ENCODE measurements at regions of chr17 and their contacts with region 1.

Region 1: DNA sequence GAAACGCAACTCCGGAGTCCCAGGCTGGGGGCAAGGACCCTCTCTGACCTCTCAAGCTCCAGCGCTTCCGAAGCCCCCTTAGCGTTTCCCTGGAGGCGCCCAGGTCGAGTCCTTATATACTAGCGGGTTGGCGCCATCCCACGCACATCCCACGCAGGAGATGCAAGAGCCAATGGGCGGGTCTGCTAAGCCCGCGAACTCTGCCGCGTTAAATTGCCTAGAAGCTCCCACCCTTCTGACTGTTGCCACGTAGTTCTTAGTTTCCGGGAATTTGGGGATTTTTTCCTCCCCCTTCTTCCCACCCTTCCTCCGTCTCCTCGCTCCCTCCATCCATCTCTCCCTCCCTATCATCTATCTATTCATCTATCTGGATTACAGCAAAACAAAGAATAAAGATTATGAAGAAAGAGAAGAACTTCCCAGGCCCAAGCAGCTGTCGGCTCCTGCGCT is at the start of gene SLFN11:
- DNase-seq: peak; percentile 94
- ATAC-seq: peak; percentile 98
- H3K4me3 ChIP-seq: peak within 1 kb of the TSS; percentile 92 to 99
- H3K27ac ChIP-seq: peak within 1 kb of the TSS; percentile 98 to 99
- H3K4me1 ChIP-seq: no peaks in the 10 kb centered on the region
- H3K27me3 ChIP-seq: no peaks in the 10 kb centered on the region
- total RNA-seq, gene SLFN11: 49.0 to 93.3 TPM

Region 2: GRCh38 chr17:35242805-35243560 is 130.6 kb before region 1 on chr17 and contains the start of gene SLFN5:
- intact Hi-C with region 1: loop called in 1 of 2 experiments (anchors 2 kb)
- DNase-seq: peak; percentile 96 to 97
- ATAC-seq: peak; percentile 97
- H3K4me3 ChIP-seq: peak within 1 kb of the TSS; percentile 75 to 79
- H3K27ac ChIP-seq: peak within 1 kb of the TSS; percentile 20 to 76
- H3K4me1 ChIP-seq: no peaks in the 10 kb centered on the region
- H3K27me3 ChIP-seq: no peaks in the 10 kb centered on the region
- total RNA-seq, gene SLFN5: 40.4 to 66.3 TPM

Region 3: DNA sequence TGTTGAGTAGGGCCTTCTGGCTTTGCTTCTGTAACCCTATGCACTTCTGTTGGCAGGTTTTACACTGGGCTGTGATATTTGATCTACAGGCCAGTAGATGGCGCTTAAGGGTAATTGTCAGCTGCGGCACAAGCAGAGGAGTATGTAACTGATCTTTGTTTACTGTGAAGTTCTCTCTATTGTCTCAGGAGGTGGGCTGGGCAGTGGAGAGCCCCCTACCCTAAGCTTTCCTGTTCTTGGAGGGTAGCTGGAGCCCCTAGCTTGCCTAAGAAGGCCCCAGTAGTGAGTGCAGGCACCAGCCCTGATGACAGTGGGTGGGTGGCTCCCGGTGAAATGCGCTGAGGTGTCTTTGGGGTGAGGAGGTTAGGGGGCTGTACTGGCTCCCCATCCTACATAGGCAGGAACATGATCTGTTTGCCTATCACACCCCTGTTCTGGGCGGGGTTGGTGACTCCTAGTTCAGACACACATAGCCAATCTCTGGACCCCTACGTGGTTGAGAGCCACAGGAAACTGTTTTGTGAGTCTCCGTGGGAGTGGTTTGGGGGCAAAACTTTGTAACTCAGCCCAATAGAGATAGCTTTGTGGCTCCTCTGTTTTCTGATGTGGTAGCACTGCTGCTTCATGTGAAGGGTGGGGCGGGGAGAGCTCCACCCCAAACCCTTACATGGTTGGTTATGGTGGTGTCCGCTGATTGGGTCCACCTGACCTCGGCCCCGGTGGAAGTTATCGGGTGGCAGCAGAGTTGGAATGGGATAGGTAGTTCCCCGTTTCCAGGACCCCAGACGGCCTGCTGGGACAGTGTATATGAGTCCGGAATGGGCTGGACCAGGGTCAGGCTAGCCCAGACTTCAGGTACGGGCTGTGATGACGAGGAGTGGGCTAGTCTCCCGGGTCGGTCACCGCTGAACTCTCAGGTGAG is 60.5 kb before region 1 on chr17:
- intact Hi-C with region 1: loop called in 1 of 2 experiments (anchors 2 kb)
- DNase-seq: peak in 1 of 2 donors; percentile 70
- ATAC-seq: peak; percentile 93
- H3K4me3 ChIP-seq: peak overlapping the region in 1 of 2 donors; percentile 38
- H3K27ac ChIP-seq: no peak overlapping the region
- H3K4me1 ChIP-seq: no peaks in the 10 kb centered on the region
- H3K27me3 ChIP-seq: no peaks in the 10 kb centered on the region

Region 4: DNA sequence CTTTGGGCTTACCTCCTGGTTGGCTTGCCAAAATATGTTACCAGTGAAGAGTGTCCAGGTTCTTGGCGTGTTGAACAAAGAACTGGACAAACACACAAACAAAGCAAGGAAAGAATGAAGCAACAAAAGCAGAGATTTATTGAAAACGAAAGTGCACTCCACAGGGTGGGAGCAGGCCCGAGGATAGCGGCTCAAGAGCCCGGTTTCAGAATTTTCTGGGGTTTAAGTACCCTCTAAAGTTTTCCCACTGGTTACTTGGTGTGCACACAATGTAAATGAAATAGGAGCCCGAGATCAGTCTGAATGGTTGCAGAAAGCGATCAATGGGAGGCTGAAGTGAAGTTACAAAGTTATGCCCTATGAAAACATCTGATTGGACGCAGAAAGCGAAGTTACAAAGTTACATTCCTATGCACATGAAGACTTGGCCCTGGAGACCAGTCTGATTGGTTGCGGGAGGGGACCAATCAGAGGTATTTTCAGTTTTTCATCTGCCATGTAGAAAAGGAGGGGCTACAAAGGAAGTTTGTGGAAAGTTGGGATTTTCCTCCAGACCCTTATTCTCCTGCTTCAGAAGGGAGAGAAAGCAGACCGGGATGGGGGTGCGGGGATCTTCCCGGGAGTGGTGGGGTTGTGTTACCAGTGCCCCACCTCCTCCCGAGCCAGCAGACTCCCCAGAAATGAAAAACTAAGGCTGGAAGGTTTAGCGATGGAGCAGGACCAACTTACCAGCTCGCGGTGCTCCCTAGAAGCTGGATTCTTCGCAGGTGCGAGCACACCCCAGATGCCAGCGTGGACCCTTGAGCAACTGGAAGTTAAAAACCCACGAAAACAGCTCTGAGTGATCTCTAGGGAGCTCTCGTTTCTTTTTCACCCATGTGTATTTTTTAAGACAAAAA is 58.9 kb after region 1 on chr17 and contains the start of gene SLFN12:
- intact Hi-C with region 1: loop called in 1 of 2 experiments (anchors 2 kb)
- DNase-seq: peak in 1 of 2 donors; percentile 77
- ATAC-seq: peak; percentile 95
- H3K4me3 ChIP-seq: peak within 1 kb of the TSS; percentile 66 to 100
- H3K27ac ChIP-seq: peak within 1 kb of the TSS; percentile 63 to 72
- H3K4me1 ChIP-seq: peaks cover 0 to 7% of the 10 kb centered on the region in 2 donors
- H3K27me3 ChIP-seq: no peaks in the 10 kb centered on the region
- total RNA-seq, gene SLFN12: 19.5 to 20.8 TPM

Region 5: DNA sequence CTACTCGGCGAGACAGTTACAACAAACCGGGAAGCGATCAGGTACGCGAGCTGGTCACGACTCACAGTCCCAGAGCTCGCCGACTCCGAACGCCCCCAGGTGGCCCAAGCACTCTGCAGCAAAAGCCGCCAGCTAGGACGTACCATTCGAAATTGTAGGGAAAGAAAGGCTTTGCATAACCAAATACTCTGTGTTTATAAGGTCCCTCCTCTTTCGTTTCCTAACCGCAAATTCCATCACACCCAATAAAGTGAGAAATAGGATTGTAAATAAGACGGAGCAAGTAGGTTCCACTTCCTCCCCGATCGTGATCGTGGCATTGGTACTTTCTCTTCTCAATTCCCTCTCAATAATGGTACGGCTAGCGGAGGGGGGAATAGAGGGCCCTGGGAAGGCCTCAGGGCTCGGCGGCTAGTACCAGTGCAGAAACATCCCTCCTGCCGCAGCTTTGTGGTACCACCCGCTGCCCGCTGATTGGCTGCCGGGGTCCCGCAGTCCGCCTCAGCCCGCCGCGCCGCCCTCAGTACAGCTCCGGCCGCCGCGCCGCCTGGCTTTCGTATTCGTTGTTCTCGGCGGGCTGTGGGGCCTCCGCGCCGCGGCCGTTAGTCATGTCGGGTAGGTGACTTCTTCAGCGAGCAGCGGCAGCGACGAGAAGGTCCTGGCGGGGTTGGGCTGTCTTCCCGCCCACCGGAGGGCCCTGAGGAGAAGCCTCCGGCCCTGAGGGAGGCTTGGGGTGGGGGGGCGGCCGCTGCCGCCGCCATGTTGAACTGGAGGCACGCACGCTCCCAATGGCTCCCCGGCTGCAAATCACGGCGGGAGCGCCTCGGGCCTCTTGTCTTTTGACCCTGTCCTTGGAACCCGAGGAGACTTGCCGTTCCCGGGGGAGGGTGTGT is 435.6 kb after region 1 on chr17 and contains the start of gene TAF15:
- intact Hi-C with region 1: loop called in 1 of 2 experiments (anchors 5 kb)
- DNase-seq: peak; percentile 97 to 98
- ATAC-seq: peak; percentile 99
- H3K4me3 ChIP-seq: peak within 1 kb of the TSS; percentile 46 to 95
- H3K27ac ChIP-seq: peak within 1 kb of the TSS; percentile 73 to 92
- H3K4me1 ChIP-seq: no peaks in the 10 kb centered on the region
- H3K27me3 ChIP-seq: no peaks in the 10 kb centered on the region
- total RNA-seq, gene TAF15: 136 to 167 TPM

Measured in aorta (tissue), 5 donors.